ENCODE measurements at regions of chr18 and their contacts with region 1.

Region 1: DNA sequence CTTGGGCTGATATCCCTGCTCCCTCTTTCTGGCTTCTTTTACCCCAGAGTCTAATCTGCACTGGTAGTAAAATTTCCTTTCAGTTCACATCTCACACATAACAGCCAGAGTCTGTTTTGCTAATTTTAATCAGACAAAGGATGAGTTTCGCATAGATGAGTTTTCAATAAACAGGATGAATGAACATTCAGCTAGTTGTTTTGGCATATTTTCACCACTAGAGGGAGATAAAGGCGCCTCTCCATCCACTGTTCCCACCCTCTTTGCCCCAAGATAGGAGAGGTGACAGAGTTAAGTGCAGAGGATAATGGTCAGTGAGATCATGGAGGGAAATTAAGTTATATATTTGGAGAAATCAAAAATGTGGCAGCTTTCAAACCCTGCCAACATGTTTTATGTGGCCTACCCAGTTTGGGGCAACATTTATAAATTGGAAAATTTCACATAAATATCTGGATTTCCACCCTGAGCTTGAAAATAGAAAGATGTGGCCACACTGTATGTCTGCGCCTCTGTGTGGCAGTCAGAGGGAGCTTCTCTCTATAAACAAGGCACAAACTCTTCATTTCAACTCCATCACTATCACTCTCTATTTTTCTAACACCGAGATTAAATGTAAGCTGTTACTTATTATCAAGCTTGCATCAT is 48.5 kb upstream of the DTNA start:
- DNase-seq: no peak
- H3K4me3 ChIP-seq: no peak overlapping the region
- H3K27me3 ChIP-seq: no peaks in the 10 kb centered on the region
- CTCF ChIP-seq: peak; percentile 83

Region 2: GRCh38 chr18:34676816-34677574 is 15.4 kb after region 1 on chr18:
- CTCF ChIA-PET with region 1: interaction called, 54 read pairs
- POLR2A ChIA-PET with region 1: no interaction called
- DNase-seq: no peak
- H3K4me3 ChIP-seq: no peak overlapping the region
- H3K27me3 ChIP-seq: no peaks in the 10 kb centered on the region; the same call in 1 of the 2 replicates
- CTCF ChIP-seq: no peak

Region 3: GRCh38 chr18:34701911-34702310 is 40.3 kb after region 1 on chr18:
- CTCF ChIA-PET with region 1: interaction called, 53 read pairs
- POLR2A ChIA-PET with region 1: no interaction called
- DNase-seq: no peak
- H3K4me3 ChIP-seq: no peak overlapping the region
- H3K27me3 ChIP-seq: no peaks in the 10 kb centered on the region; the same call in 1 of the 2 replicates
- CTCF ChIP-seq: no peak

Region 4: GRCh38 chr18:34723143-34723542 is 61.6 kb after region 1 on chr18:
- CTCF ChIA-PET with region 1: interaction called, 23 read pairs
- POLR2A ChIA-PET with region 1: no interaction called
- DNase-seq: no peak
- H3K4me3 ChIP-seq: no peak overlapping the region
- H3K27me3 ChIP-seq: no peaks in the 10 kb centered on the region
- CTCF ChIP-seq: no peak

Region 5: GRCh38 chr18:34767601-34768027 is 106.0 kb after region 1 on chr18:
- CTCF ChIA-PET with region 1: interaction called, 22 read pairs
- POLR2A ChIA-PET with region 1: no interaction called
- DNase-seq: peak; percentile 80
- H3K4me3 ChIP-seq: no peak overlapping the region
- H3K27me3 ChIP-seq: no peaks in the 10 kb centered on the region
- CTCF ChIP-seq: no peak

Region 6: DNA sequence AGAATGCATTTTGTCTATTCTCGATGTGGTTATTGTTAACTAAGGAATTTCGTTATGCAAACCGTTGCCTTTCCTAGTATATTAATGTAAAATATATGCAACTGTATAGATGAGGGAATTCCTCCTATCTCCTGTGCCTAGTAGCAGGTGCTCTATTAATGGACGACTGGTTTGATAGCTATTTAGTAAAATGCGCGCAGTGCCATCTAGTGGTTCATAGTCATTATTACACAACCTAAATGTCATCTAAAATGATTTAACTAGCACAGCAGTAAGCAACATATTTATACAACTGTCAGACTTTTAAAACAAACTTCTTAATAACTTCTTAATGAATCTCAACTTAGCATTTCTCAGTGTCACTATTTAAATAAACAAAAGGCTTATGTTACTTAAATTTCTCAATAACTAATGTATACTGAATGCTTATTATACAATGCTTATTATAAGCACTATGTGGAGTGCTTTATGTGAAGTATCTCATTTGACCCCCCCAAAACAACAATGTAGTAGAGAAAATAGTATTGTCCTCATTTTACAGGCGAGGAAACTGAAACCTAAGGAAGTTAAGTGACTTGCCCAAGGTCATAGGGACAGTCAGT is 126.4 kb after region 1 on chr18:
- CTCF ChIA-PET with region 1: interaction called, 180 read pairs
- POLR2A ChIA-PET with region 1: no interaction called
- DNase-seq: no peak
- H3K4me3 ChIP-seq: no peak overlapping the region
- H3K27me3 ChIP-seq: no peaks in the 10 kb centered on the region
- CTCF ChIP-seq: peak; percentile 55